Heart left ventricle (tissue), 16 donors: ENCODE measurements at regions of chr2 and their contacts with region 1.

Region 1: GRCh38 chr2:69306822-69307578 is 80.0 kb downstream of the GFPT1 start:
- DNase-seq: peak; percentile 83 to 93 (median 84)
- ATAC-seq: peak; percentile 82 to 92 (median 90)
- H3K4me3 ChIP-seq: peak overlapping the region; percentile 31 to 76 (median 62)
- H3K27ac ChIP-seq: peak overlapping the region; percentile 44 to 88 (median 78)
- H3K4me1 ChIP-seq: peaks cover 0 to 58% (median 30%) of the 10 kb centered on the region in 12 donors
- H3K27me3 ChIP-seq: peaks cover 0 to 23% (median 0%) of the 10 kb centered on the region in 9 donors
- CTCF ChIP-seq: peak; percentile 74 to 95 (median 86)
- POLR2A ChIP-seq: no peak

Region 2: GRCh38 chr2:69012310-69013141 is 294.5 kb before region 1 on chr2:
- intact Hi-C with region 1: loop called in 6 of 10 experiments (anchors 1 to 5 kb)
- DNase-seq: peak; percentile 66 to 80 (median 77)
- ATAC-seq: peak; percentile 65 to 78 (median 71)
- H3K4me3 ChIP-seq: peak overlapping the region; percentile 65 to 83 (median 72)
- H3K27ac ChIP-seq: peak overlapping the region in 8 of 12 donors; percentile 55 to 89 (median 77)
- H3K4me1 ChIP-seq: peaks cover 0 to 20% (median 10%) of the 10 kb centered on the region in 12 donors
- H3K27me3 ChIP-seq: peaks cover 0 to 41% (median 14%) of the 10 kb centered on the region in 9 donors
- CTCF ChIP-seq: peak; percentile 51 to 86 (median 75)
- POLR2A ChIP-seq: no peak

Region 3: DNA sequence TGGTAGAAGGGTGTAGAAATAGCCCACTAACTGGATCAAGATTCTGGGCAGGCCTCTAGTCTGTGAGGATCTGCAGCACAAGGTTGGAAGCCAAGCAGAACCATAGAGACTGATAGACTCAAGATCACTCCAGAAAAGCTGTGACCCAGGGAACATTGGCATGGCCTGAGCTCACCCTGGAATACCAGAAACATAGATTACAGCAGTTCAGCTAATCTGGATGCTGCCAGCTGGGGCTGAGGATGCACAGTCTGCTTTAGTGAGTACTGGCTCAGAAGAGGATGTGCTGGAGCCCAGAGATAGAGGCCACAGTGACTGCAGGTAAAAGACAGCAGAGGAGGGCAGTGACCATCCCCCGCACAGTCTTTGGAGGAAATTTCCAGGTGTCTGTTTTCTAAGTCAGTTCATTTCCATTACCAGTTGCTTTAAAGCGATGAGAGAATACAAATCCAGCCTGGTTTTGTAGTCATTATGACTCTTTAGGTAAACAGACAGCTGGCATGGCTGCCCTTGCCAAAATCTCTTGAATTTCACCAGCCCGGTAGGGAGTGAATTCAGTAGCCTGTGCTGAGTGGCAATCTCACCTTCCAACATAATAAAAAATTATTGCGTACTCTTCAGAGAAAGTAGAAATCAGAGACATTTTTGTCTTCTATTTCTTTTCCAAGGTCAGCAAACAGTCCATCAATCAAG is 174.9 kb before region 1 on chr2:
- intact Hi-C with region 1: no loop called
- DNase-seq: no peak
- ATAC-seq: peak in 1 of 4 donors; percentile 63
- H3K4me3 ChIP-seq: no peak overlapping the region
- H3K27ac ChIP-seq: no peak overlapping the region
- H3K4me1 ChIP-seq: peaks cover 0 to 6% (median 0%) of the 10 kb centered on the region in 12 donors
- H3K27me3 ChIP-seq: no peaks in the 10 kb centered on the region
- CTCF ChIP-seq: no peak
- POLR2A ChIP-seq: no peak

Region 4: GRCh38 chr2:69149631-69150215 is 157.3 kb before region 1 on chr2:
- intact Hi-C with region 1: loop called in 1 of 10 experiments (anchors 5 kb)
- DNase-seq: peak in 4 of 5 donors; percentile 32 to 53 (median 37)
- ATAC-seq: peak in 3 of 4 donors; percentile 45 to 66 (median 60)
- H3K4me3 ChIP-seq: no peak overlapping the region
- H3K27ac ChIP-seq: peak overlapping the region in 7 of 12 donors; percentile 1 to 74 (median 60)
- H3K4me1 ChIP-seq: peaks cover 0 to 54% (median 28%) of the 10 kb centered on the region in 12 donors
- H3K27me3 ChIP-seq: no peaks in the 10 kb centered on the region
- CTCF ChIP-seq: no peak
- POLR2A ChIP-seq: no peak

Region 5: GRCh38 chr2:69214898-69215297 is 92.1 kb before region 1 on chr2:
- intact Hi-C with region 1: loop called in 2 of 10 experiments (anchors 5 to 10 kb)
- DNase-seq: peak; percentile 39 to 64 (median 58)
- ATAC-seq: peak; percentile 47 to 82 (median 80)
- H3K4me3 ChIP-seq: no peak overlapping the region
- H3K27ac ChIP-seq: peak overlapping the region in 7 of 12 donors; percentile 9 to 46 (median 21)
- H3K4me1 ChIP-seq: peaks cover 0 to 52% (median 23%) of the 10 kb centered on the region in 12 donors
- H3K27me3 ChIP-seq: no peaks in the 10 kb centered on the region
- CTCF ChIP-seq: no peak
- POLR2A ChIP-seq: no peak